Ascending aorta (tissue), 2 donors: ENCODE measurements at regions of chr12 and their contacts with region 1.

Region 1: GRCh38 chr12:123232807-123233543 is at the starts of genes MPHOSPH9 and MTRFR:
- DNase-seq: peak; percentile 98 to 100
- H3K4me3 ChIP-seq: peak within 1 kb of the TSS; percentile 81 to 95
- H3K27ac ChIP-seq: peak within 1 kb of the TSS; percentile 86 to 93
- H3K4me1 ChIP-seq: peaks cover 5 to 19% of the 10 kb centered on the region in 2 donors
- H3K27me3 ChIP-seq: no peaks in the 10 kb centered on the region
- CTCF ChIP-seq: no peak
- total RNA-seq, gene MPHOSPH9: 21.6 TPM
- total RNA-seq, gene MTRFR: 0.85 TPM

Region 2: DNA sequence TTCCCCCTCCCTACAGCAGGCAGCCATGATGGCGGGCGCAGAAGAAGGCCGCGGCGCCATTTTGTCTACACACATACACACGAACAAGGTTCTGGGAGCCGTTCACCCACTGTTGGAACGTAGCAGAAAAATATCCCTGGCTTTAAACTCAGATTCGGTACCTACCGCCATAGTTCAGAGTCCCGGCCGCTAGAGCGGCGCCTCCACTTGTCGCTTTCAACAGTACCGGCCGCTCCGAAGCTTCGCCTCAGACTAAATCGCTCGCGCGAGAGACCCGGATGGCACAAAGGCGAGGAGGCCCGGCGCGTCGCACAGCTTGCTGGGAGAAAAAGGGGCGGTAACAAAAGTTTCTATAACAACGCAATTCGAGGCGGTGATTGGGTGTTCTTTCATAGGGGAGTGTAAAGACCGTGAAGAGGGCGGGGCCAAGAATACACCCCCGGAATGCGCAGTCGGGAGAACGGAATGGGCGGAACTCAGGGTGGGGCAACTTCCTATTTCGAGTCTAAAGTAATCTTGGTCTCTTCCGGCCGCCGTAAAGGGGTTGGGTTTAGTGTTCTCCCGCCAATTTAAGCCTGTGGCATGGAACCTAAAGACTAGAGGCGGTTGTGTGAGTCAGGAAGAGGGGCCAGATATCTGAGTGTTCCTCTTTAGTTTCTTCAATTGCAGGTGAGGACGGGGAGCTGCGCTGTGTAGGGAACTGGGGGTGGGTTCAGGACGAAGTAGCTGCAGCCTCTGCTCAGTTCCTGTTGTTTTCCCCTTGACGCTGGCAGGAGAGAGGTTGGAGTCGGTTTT is 706.1 kb before region 1 on chr12 and contains the starts of genes KNTC1 and RSRC2:
- intact Hi-C with region 1: loop called (anchors 2 kb)
- DNase-seq: peak; percentile 97 to 100
- H3K4me3 ChIP-seq: peak within 1 kb of the TSS; percentile 89 to 96
- H3K27ac ChIP-seq: peak within 1 kb of the TSS; percentile 99
- H3K4me1 ChIP-seq: peaks cover 14 to 27% of the 10 kb centered on the region in 2 donors
- H3K27me3 ChIP-seq: no peaks in the 10 kb centered on the region
- CTCF ChIP-seq: no peak
- total RNA-seq, gene KNTC1: 10.5 TPM
- total RNA-seq, gene RSRC2: 44.8 TPM

Region 3: DNA sequence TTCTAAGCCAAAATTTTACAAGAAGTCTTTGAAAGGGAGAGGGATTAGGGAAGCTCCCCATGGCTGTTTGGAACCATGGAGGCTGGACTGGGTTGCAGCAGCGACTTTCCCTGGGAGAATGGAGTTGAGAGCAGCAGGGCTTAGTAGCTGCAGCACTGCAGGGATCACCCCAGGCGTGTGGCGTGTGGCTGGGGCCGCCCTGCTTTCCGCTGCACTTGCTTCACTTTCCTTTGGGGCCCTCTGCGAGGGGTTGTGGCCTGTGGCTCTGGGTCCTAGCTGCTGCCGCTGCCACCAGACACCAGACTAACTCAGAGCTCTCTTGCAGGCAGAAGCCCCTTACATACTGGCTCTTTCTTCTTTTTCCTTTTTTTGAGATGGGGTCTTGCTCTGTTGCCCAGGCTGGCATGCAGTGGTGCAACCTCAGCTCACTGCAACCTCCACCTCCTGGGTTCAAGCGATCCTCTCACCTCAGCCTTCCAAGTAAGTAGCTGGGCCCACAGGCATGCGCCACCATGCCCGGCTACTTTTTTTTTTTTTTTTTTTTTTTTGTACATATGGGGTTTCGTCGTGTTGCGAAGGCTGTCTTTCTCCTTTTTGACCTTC is 433.2 kb before region 1 on chr12:
- intact Hi-C with region 1: no loop called
- DNase-seq: no peak
- H3K4me3 ChIP-seq: no peak overlapping the region
- H3K27ac ChIP-seq: no peak overlapping the region
- H3K4me1 ChIP-seq: no peaks in the 10 kb centered on the region
- H3K27me3 ChIP-seq: no peaks in the 10 kb centered on the region
- CTCF ChIP-seq: no peak

Region 4: GRCh38 chr12:122834104-122834920 is 398.7 kb before region 1 on chr12:
- intact Hi-C with region 1: no loop called
- DNase-seq: peak in 1 of 2 donors; percentile 83
- H3K4me3 ChIP-seq: peak overlapping the region; percentile 68 to 75
- H3K27ac ChIP-seq: peak overlapping the region; percentile 60 to 70
- H3K4me1 ChIP-seq: peaks cover 0 to 7% of the 10 kb centered on the region in 2 donors
- H3K27me3 ChIP-seq: no peaks in the 10 kb centered on the region
- CTCF ChIP-seq: peak in 2 of 3 experiments; percentile 11 to 19

Region 5: GRCh38 chr12:122965851-122966722 is 266.9 kb before region 1 on chr12 and contains the start of gene ABCB9:
- intact Hi-C with region 1: loop called (anchors 5 kb)
- DNase-seq: peak; percentile 54 to 95
- H3K4me3 ChIP-seq: peak within 1 kb of the TSS; percentile 62 to 73
- H3K27ac ChIP-seq: peak within 1 kb of the TSS; percentile 14 to 52
- H3K4me1 ChIP-seq: peaks cover 4 to 26% of the 10 kb centered on the region in 2 donors
- H3K27me3 ChIP-seq: no peaks in the 10 kb centered on the region
- CTCF ChIP-seq: no peak
- total RNA-seq, gene ABCB9: 19.6 TPM

Region 6: GRCh38 chr12:123043536-123044001 is 189.4 kb before region 1 on chr12:
- intact Hi-C with region 1: loop called (anchors 1 kb)
- DNase-seq: peak; percentile 42 to 94
- H3K4me3 ChIP-seq: peak overlapping the region in 1 of 2 donors; percentile 32
- H3K27ac ChIP-seq: peak overlapping the region; percentile 56 to 76
- H3K4me1 ChIP-seq: peaks cover 0 to 8% of the 10 kb centered on the region in 2 donors
- H3K27me3 ChIP-seq: no peaks in the 10 kb centered on the region
- CTCF ChIP-seq: peak; percentile 72 to 87 (median 87)

Region 7: GRCh38 chr12:123141615-123142517 is 91.1 kb before region 1 on chr12:
- intact Hi-C with region 1: no loop called
- DNase-seq: peak in 1 of 2 donors; percentile 84
- H3K4me3 ChIP-seq: no peak overlapping the region
- H3K27ac ChIP-seq: peak overlapping the region; percentile 66 to 75
- H3K4me1 ChIP-seq: peaks cover 19 to 31% of the 10 kb centered on the region in 2 donors
- H3K27me3 ChIP-seq: no peaks in the 10 kb centered on the region
- CTCF ChIP-seq: no peak

Region 8: DNA sequence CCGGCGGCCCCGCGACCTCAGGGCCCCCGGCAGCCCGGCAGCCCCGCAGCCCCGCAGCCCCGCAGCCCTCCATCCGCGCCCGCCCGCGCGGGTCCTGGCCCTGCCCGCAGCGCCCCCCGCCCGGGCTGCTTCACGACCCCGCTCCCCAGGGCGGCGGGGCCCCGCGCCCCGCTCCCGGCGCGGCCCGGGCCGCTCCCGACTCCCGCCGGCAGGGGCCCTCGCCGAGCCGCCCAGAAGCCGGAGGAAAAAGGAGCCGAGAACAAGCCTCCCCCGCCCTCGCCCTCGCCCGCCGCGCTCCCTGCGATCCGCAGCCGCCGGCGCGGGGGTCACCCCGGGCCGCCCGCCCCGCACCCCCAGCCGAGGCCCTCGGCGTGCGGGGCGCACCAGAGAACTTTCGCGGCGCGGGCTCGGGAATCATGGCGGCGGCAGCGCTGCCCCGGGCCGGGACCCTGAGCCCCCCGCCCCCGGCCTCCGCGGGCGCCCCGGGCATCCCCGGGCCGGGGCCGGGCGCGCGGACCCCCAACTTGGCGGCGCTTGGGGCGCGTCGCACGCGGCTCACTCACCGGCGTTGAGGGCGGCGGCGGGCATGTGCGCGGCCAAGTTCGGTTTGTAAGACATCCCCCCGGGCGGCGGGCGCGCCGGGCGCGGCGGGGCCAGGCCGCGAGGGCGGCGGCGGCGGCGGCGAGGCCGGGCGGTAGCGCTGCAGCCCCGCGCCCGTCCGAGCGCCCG is 38.2 kb after region 1 on chr12:
- intact Hi-C with region 1: loop called (anchors 2 kb)
- DNase-seq: peak in 1 of 2 donors; percentile 82
- H3K4me3 ChIP-seq: peak overlapping the region; percentile 79 to 98
- H3K27ac ChIP-seq: peak overlapping the region; percentile 80 to 83
- H3K4me1 ChIP-seq: peaks cover 3 to 23% of the 10 kb centered on the region in 2 donors
- H3K27me3 ChIP-seq: no peaks in the 10 kb centered on the region
- CTCF ChIP-seq: peak in 2 of 3 experiments; percentile 9 to 73